ENCODE measurements at regions of chr4 and their contacts with region 1.

Region 1: DNA sequence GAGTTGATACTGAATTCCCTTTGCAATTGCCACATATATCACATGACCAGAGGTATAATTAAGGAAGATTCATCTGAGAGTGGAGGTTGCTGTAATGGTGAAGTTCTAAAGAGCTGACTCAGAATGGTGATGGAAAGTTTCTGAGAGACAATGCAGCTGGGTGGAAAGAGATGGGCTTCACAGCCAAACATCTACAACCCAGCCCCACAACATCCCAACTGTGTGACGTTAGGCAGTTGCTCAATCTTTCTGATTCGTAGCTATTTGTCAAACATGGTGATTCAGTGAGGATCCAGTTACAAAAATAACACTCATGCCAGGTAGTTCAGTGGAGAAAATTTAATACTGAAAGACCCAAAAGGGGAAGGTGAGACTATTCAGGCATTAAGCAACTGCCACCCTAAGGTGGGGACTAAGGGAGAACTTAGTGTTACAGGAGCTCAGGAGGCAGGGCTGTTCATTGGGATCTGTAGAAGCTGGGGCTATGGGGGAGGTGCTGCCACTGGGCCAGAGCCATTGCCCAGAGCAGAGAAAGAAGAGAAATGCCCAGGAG is 6.9 kb upstream of the AFF1 start:
- DNase-seq: peak; percentile 35
- ATAC-seq: peak; percentile 74 to 95

Region 2: GRCh38 chr4:87006676-87007527 is 79.0 kb after region 1 on chr4:
- intact Hi-C with region 1: loop called in 1 of 2 experiments (anchors 5 kb)
- DNase-seq: peak; percentile 95
- ATAC-seq: peak; percentile 94 to 96

Region 3: DNA sequence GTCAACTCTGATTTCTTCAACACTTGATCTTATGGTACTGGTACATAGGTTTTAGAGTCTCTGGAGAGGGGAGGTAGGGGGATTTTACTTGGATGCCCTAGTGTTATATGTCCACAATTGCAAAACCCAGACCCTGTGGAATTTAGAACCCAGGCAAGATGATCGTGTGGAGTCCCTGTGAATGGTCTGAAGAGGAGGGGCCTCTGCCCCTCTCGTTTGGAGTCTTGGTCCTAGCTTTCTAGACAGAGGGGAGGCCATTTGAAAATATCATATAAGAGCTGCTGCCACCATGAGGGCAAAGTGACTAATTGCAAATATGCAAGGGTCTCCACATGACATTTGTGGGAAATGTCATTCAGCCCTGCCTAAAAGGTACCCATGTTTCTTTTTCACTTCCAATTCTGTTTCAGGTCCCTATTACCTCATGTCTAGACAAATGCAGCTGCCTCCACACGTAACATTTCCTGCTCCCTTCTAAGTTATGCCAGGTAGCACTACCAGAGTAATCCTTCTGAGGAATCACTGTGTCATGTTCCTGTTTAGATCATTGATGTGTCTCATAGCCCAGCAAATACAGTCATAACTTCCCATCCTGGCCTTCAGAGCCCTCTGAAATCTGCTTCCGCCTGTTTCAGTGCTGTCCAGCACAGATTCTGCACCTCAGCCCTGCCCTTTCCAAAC is 165.7 kb after region 1 on chr4:
- intact Hi-C with region 1: loop called (anchors 5 kb)
- DNase-seq: no peak
- ATAC-seq: peak; percentile 67 to 75

Region 4: GRCh38 chr4:87120411-87121199 is 192.7 kb after region 1 on chr4:
- intact Hi-C with region 1: loop called in 1 of 2 experiments (anchors 10 kb)
- DNase-seq: peak; percentile 42
- ATAC-seq: peak; percentile 86 to 88

Region 5: DNA sequence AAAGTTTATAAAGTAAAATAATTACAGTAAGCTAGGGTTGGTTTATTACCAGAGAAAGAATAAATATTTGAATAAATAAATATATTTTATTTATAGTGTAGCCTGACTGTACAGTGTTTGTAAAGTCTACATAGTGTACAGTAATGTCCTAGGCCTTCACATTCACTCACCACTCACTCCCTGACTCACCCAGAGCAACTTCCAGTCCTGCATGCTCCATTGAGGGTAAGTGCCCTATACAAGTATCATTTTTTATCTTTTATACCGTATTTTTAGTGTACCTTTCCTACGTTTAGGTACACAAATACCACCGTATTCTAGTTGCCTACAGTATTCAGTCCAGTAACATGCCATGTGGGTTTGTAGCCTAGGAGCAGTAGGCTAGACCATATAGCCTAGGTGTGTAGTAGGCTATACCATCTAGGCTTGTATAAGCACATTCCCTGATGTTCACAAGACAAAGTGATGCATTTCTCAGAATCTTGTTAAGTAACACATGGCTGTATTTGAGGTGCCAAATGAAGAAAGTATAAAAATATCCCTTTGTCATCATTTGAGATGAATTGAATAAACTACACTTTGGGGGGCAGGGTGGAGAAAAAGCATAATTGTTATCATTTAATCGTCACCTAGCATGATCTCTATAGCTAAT is 307.2 kb after region 1 on chr4:
- intact Hi-C with region 1: loop called (anchors 2 to 5 kb)
- DNase-seq: no peak
- ATAC-seq: peak in 1 of 2 donors; percentile 35

Measured in left cardiac atrium (tissue), 4 donors.